ENCODE measurements at regions of chr1 and their contacts with region 1.

Region 1: GRCh38 chr1:113811888-113812660 is at the start of gene RSBN1:
- DNase-seq: peak; percentile 99
- H3K4me3 Mint-ChIP-seq: peak within 1 kb of the TSS; percentile 96
- H3K27ac Mint-ChIP-seq: peak within 1 kb of the TSS; percentile 96
- H3K4me1 Mint-ChIP-seq: peaks cover 34% of the 10 kb centered on the region
- H3K27me3 Mint-ChIP-seq: no peaks in the 10 kb centered on the region
- total RNA-seq, gene RSBN1: 18.4 and 19.5 TPM in 2 replicates

Region 2: GRCh38 chr1:112955781-112956543 is 856.1 kb before region 1 on chr1 and contains the start of gene SLC16A1:
- intact Hi-C with region 1: loop called (anchors 1 kb)
- DNase-seq: peak; percentile 90
- H3K4me3 Mint-ChIP-seq: peak within 1 kb of the TSS; percentile 90
- H3K27ac Mint-ChIP-seq: peak within 1 kb of the TSS; percentile 100
- H3K4me1 Mint-ChIP-seq: peaks cover 59% of the 10 kb centered on the region
- H3K27me3 Mint-ChIP-seq: no peaks in the 10 kb centered on the region
- total RNA-seq, gene SLC16A1: 73.6 and 77.4 TPM in 2 replicates

Region 3: GRCh38 chr1:113759333-113760101 is 52.6 kb before region 1 on chr1 and contains the start of gene PHTF1:
- intact Hi-C with region 1: loop called (anchors 1 kb)
- DNase-seq: peak; percentile 53
- H3K4me3 Mint-ChIP-seq: peak within 1 kb of the TSS; percentile 95
- H3K27ac Mint-ChIP-seq: peak within 1 kb of the TSS; percentile 97
- H3K4me1 Mint-ChIP-seq: peaks cover 37% of the 10 kb centered on the region
- H3K27me3 Mint-ChIP-seq: no peaks in the 10 kb centered on the region
- total RNA-seq, gene PHTF1: 14.7 and 16.6 TPM in 2 replicates

Region 4: DNA sequence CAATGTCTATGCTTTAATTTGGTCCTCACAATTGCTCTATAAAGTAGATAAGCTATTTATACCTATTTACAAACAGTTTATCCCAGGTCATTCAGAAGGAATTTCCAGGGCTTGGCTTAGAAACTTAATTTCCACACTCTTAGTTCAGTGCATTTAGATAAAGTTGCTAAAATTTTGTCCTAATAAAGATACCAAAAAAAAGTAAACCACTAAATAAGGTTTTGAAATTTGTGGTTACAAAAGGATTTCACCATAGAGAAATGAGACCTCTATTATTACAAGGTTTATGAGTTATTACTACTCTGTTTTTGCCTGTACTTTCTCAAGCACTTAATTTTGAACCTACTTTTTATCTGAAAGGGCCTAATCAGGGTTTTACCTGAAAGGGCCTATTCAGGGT is 37.0 kb after region 1 on chr1:
- intact Hi-C with region 1: no loop called
- DNase-seq: no peak
- H3K4me3 Mint-ChIP-seq: no peak overlapping the region
- H3K27ac Mint-ChIP-seq: no peak overlapping the region
- H3K4me1 Mint-ChIP-seq: peaks cover 14% of the 10 kb centered on the region
- H3K27me3 Mint-ChIP-seq: no peaks in the 10 kb centered on the region

Region 5: GRCh38 chr1:113871597-113872113 is 59.6 kb after region 1 on chr1 and contains the start of gene PTPN22:
- intact Hi-C with region 1: loop called (anchors 1 kb)
- DNase-seq: peak; percentile 80
- H3K4me3 Mint-ChIP-seq: peak within 1 kb of the TSS; percentile 93
- H3K27ac Mint-ChIP-seq: peak within 1 kb of the TSS; percentile 98
- H3K4me1 Mint-ChIP-seq: peaks cover 73% of the 10 kb centered on the region
- H3K27me3 Mint-ChIP-seq: no peaks in the 10 kb centered on the region
- total RNA-seq, gene PTPN22: 66.2 and 66.7 TPM in 2 replicates

Region 6: DNA sequence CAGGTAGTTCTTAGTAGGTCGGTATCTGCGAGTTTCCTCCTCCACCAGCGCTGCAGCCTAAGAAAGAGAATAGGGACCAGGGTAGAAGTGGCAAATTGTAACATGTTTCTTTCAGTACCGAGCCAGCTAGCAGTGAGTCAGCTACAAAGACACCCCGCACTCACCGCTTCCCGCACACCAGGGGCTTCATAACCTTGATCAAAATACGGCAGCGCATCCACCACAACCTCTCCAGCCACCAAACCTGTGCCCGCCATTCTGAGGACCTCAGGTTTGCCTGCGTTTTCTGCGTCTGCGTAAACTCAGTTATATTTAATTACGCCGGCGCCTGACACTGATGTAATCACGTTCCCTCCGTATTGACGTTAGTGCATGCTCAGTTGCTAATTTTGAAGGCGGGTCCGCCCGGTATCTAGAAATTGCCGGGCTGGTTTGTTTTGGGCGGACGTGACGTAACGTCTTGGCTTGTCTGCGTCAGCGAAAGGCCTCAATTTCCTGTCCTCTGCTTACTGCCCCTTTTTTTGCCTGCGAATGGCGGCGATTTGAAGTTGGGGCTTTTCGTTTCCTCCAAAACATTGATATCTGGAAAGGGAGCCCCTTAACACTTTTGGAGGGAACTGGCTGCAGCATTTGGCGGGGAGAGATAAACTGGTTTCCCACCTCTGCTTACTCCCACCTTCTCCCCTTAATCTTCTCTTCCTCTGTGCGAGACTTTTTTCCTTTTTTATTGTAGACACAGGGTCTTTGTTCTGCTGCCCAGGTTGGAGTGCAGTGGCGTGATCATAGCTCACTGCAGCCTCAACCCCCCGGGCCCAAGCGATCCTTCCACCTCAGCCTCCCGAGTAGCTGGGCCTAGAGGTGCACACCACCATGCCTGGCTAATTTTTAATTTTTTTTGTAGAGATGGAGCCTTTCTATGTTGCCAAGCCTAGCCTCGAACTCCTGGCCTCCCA is 769.5 kb after region 1 on chr1 and contains the start of gene BCAS2:
- intact Hi-C with region 1: loop called (anchors 2 kb)
- DNase-seq: peak; percentile 94
- H3K4me3 Mint-ChIP-seq: peak within 1 kb of the TSS; percentile 91
- H3K27ac Mint-ChIP-seq: peak within 1 kb of the TSS; percentile 92
- H3K4me1 Mint-ChIP-seq: peaks cover 34% of the 10 kb centered on the region
- H3K27me3 Mint-ChIP-seq: peaks cover 5% of the 10 kb centered on the region
- total RNA-seq, gene BCAS2: 61.9 and 63.0 TPM in 2 replicates